WTC11 (cell line): ENCODE measurements at regions of chr3 and their contacts with region 1.

Region 1: DNA sequence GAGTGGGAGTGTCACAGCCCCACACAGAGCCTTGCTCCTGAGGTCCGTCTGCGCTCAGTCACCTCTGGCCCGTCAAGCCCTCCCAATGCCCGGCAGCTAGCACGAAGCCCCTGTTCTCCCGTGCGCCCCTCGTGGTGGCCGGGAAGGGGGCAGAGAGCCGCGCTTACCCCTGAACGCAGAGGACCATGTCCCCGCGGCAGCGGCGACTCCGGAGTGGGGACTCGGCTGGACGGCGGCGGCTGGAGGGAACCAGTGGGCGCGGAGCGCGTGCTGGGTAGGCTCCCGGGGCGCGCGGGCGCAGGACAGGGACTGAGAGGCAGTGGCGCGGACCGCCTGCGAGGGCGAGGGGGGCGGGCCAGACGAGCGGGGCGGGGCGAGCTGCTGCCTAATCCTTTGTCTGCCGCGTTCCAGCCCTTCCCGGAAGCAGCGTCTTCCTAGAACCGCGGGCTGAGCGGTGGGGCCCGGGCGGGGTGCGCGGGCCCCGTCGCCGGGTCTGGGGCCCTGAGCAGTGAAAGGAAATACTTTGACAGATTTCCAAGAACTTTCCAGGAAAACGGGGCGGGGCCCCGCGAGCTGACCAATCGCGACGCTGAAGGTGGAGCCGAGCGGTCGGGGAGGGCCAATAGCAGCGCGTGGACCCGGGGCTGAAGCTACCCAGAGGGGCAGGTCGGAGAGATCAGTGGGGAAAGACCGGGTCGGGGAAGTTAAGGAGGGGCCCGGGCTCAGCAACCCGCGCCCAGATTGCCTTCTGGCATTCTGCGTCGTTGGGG is at the start of gene CISH:
- DNase-seq: peak; percentile 94
- ATAC-seq: peak; percentile 81
- H3K4me3 Mint-ChIP-seq: peak within 1 kb of the TSS; percentile 76
- H3K27ac Mint-ChIP-seq: no peak within 1 kb of the TSS
- H3K4me1 Mint-ChIP-seq: peaks cover 24% of the 10 kb centered on the region
- H3K27me3 Mint-ChIP-seq: peaks cover 51% of the 10 kb centered on the region
- CTCF ChIP-seq: peak; percentile 46; the same call in 1 of the 2 replicates
- total RNA-seq, gene CISH: 1.8 to 2.4 TPM (median 1.9 TPM) in 3 replicates

Region 2: DNA sequence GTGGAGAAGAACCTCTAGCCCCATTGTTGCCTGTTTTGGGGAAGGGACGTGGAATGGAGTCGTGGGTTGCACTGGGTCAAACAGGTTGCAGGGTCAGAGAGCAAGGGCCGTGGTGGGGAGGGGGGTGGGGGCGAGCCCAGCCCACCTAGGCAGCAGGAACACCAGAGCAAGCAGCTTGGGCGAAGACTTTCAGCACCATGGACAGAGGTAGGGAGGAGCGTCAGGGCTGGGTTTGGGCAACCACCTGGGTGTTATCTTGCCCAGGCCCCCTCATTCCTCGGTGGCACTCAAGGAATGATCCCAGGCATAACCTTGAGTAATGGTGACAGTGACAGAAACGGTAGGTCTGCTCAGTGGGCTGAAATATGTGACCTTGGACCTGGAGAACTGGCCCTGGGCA is 206.4 kb before region 1 on chr3:
- CTCF ChIA-PET with region 1: no interaction called
- POLR2A ChIA-PET with region 1: no interaction called
- DNase-seq: peak; percentile 75
- ATAC-seq: peak; percentile 59
- H3K4me3 Mint-ChIP-seq: no peak overlapping the region
- H3K27ac Mint-ChIP-seq: no peak overlapping the region
- H3K4me1 Mint-ChIP-seq: no peaks in the 10 kb centered on the region
- H3K27me3 Mint-ChIP-seq: peaks cover 9% of the 10 kb centered on the region
- CTCF ChIP-seq: no peak

Region 3: GRCh38 chr3:50550079-50550741 is 61.4 kb before region 1 on chr3:
- CTCF ChIA-PET with region 1: interaction called, 15 read pairs
- POLR2A ChIA-PET with region 1: no interaction called
- DNase-seq: peak; percentile 91
- ATAC-seq: peak; percentile 82
- H3K4me3 Mint-ChIP-seq: no peak overlapping the region
- H3K27ac Mint-ChIP-seq: no peak overlapping the region
- H3K4me1 Mint-ChIP-seq: peaks cover 11% of the 10 kb centered on the region
- H3K27me3 Mint-ChIP-seq: no peaks in the 10 kb centered on the region
- CTCF ChIP-seq: peak; percentile 86

Region 4: DNA sequence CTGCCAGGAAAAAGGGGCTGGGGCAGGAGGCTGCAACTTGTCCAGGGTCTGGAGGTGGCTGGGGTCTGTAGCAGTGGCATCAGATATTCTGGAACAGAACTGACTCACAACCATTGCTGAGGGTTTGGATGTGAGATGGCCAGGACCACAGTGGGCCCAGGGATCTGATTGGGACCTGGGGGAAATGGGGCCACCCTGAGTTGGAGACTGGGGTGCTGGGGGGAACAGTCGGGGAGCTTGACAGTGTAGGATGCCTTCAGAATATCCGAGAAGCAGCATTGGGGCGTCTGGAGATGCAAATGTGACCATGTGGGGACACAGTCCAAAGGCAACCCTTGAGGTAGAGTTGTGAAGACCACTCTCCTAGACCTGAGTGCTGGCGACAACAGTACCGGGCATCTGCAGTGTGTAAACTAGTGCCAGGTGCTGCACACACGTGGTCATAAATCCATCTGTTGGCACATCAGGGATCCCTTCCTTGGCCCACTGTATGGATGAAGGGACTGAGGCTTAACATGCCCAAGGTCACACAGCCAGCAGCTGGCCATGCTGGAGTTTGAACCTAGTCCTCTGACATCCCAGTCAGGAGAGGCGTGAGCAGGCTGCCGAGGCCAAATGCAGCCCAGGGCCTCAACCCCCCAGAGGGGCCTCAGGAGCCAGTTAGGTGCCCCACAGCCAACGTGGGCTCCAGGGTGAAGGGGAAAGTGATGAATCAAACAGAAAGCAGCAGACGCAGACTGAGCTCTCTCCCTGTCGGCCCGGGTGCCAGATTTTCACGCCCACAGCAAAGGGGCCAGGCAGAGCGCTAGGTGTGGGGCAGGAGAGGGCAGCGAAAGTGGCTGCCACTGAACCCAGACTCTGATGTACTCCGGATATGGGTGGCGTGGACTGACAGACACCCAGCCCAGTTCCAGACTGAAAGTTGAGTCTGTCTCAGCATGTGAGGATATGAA is 23.6 kb before region 1 on chr3:
- CTCF ChIA-PET with region 1: interaction called, 70 read pairs
- POLR2A ChIA-PET with region 1: interaction called, 3 read pairs
- DNase-seq: no peak
- ATAC-seq: no peak
- H3K4me3 Mint-ChIP-seq: no peak overlapping the region
- H3K27ac Mint-ChIP-seq: no peak overlapping the region
- H3K4me1 Mint-ChIP-seq: no peaks in the 10 kb centered on the region
- H3K27me3 Mint-ChIP-seq: peaks cover 3% of the 10 kb centered on the region; the same call in 1 of the 2 replicates
- CTCF ChIP-seq: no peak

Region 5: DNA sequence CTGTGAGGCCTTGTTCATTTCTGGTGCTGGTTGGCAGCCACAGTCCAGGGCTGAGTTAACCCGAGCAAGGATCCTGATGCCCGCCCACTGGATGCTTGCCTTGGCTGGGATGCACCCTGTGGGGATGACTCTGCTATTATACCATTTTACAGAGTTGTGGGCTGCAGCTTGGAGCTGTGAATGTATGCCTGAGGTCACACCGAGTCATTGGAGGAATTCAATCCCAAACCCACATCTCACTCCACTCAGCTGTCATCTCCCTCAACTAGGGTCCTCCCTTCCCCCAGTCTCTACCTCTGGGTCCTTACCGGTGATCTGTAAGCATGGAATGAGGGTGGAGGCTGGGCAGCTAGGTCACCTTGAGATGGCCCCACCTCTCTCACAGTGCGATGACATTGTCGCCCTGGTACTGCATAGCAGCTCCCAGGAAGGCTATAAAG is 27.4 kb after region 1 on chr3:
- CTCF ChIA-PET with region 1: interaction called, 10 read pairs
- POLR2A ChIA-PET with region 1: no interaction called
- DNase-seq: no peak
- ATAC-seq: no peak
- H3K4me3 Mint-ChIP-seq: no peak overlapping the region
- H3K27ac Mint-ChIP-seq: no peak overlapping the region
- H3K4me1 Mint-ChIP-seq: peaks cover 38% of the 10 kb centered on the region
- H3K27me3 Mint-ChIP-seq: no peaks in the 10 kb centered on the region
- CTCF ChIP-seq: no peak

Region 6: GRCh38 chr3:50666837-50667236 is 55.2 kb after region 1 on chr3:
- CTCF ChIA-PET with region 1: interaction called, 14 read pairs
- POLR2A ChIA-PET with region 1: no interaction called
- DNase-seq: no peak
- ATAC-seq: no peak; the same call in 1 of the 2 replicates
- H3K4me3 Mint-ChIP-seq: no peak overlapping the region
- H3K27ac Mint-ChIP-seq: no peak overlapping the region
- H3K4me1 Mint-ChIP-seq: peaks cover 10% of the 10 kb centered on the region
- H3K27me3 Mint-ChIP-seq: peaks cover 9% of the 10 kb centered on the region
- CTCF ChIP-seq: no peak

Region 7: GRCh38 chr3:51099794-51100535 is 488.3 kb after region 1 on chr3:
- CTCF ChIA-PET with region 1: interaction called, 16 read pairs
- POLR2A ChIA-PET with region 1: no interaction called
- DNase-seq: peak; percentile 69
- ATAC-seq: peak; percentile 95
- H3K4me3 Mint-ChIP-seq: no peak overlapping the region
- H3K27ac Mint-ChIP-seq: no peak overlapping the region
- H3K4me1 Mint-ChIP-seq: peaks cover 11% of the 10 kb centered on the region
- H3K27me3 Mint-ChIP-seq: peaks cover 33% of the 10 kb centered on the region
- CTCF ChIP-seq: peak; percentile 50; the same call in 1 of the 2 replicates

Region 8: GRCh38 chr3:51384726-51385473 is 773.3 kb after region 1 on chr3 and contains the start of gene MANF:
- CTCF ChIA-PET with region 1: interaction called, 16 read pairs
- POLR2A ChIA-PET with region 1: interaction called, 3 read pairs
- DNase-seq: peak; percentile 97
- ATAC-seq: peak; percentile 92
- H3K4me3 Mint-ChIP-seq: peak within 1 kb of the TSS; percentile 92
- H3K27ac Mint-ChIP-seq: peak within 1 kb of the TSS; percentile 99
- H3K4me1 Mint-ChIP-seq: peaks cover 48% of the 10 kb centered on the region
- H3K27me3 Mint-ChIP-seq: no peaks in the 10 kb centered on the region
- CTCF ChIP-seq: no peak
- total RNA-seq, gene MANF: 105 to 121 TPM (median 109 TPM) in 3 replicates